ENCODE measurements at regions of chr15 and their contacts with region 1.

Region 1: DNA sequence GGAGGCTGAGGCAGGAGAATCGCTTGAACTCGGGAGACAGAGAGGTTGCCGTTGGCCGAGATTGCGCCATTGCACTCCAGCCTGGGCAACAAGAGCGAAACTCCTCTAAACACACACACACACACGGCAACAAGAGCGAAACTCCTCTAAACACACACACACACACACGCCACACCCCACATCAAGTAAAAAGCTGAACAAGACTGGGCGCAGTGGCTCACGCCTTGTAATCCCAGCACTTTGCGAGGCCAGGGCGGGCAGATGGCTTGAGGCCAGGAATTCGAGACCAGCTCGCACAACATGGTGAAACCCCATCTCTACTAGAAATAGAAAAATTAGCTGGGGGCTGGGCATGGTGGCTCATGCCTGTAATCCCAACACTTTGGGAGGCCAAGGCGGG is 49.0 kb downstream of the HOMER2 start:
- DNase-seq: no peak
- H3K4me3 ChIP-seq: no peak overlapping the region
- H3K27ac ChIP-seq: no peak overlapping the region
- H3K4me1 ChIP-seq: no peaks in the 10 kb centered on the region
- H3K27me3 ChIP-seq: no peaks in the 10 kb centered on the region
- CTCF ChIP-seq: no peak
- POLR2A ChIP-seq: no peak

Region 2: DNA sequence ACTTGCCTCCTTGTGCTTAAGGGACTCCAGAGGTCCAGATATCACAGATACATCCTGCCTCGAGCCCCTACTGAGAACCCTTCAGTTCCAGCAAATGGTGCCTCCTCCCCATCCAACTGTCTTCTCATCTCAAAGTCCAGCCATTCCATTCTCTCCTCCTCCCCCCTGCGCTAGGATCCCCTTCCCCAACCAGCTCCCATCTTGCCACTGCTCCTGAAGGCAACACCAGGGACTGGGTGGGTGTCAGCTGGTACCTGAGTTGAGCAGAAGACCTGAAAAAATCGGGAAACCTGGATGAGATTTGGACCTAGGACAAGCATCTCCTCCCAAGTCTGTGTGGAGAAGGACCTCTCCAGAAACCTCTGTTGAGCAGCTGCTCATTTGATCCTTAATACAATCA is 191.5 kb before region 1 on chr15:
- intact Hi-C with region 1: loop called (anchors 2 kb)
- DNase-seq: no peak
- H3K4me3 ChIP-seq: no peak overlapping the region
- H3K27ac ChIP-seq: no peak overlapping the region
- H3K4me1 ChIP-seq: peaks cover 0 to 5% of the 10 kb centered on the region in 2 donors
- H3K27me3 ChIP-seq: no peaks in the 10 kb centered on the region
- CTCF ChIP-seq: no peak
- POLR2A ChIP-seq: no peak

Measured in breast epithelium (tissue), 4 donors.